ENCODE measurements at regions of chr12 and their contacts with region 1.

Region 1: GRCh38 chr12:50074936-50075807 is 10.0 kb upstream of the SMARCD1 start:
- DNase-seq: peak; percentile 83
- H3K4me3 ChIP-seq: no peak overlapping the region
- H3K27ac ChIP-seq: no peak overlapping the region
- H3K4me1 ChIP-seq: peaks cover 9% of the 10 kb centered on the region
- CTCF ChIP-seq: peak; percentile 92

Region 2: DNA sequence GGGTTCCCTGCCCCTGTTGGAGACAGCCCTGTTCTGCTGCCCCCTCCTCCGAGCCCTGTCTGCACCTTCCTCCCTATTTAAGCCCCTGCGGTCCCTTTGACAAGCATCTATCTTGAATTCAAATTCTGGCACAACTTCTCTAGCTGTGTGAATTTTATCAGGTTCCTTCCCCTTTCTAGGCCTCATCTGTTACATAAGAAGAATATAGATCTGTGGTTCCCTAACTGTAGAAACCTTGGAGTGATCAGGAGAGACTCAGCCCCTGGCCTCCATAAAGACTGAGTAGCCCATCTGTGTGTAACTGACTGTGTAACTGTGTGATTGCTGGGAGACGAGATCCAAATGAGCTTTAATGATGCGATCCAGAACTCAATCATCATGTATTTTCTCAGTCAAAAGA is 36.8 kb before region 1 on chr12:
- CTCF ChIA-PET with region 1: no interaction called
- POLR2A ChIA-PET with region 1: interaction called, 3 read pairs
- intact Hi-C with region 1: loop called (anchors 5 kb)
- DNase-seq: no peak
- H3K4me3 ChIP-seq: no peak overlapping the region
- H3K27ac ChIP-seq: no peak overlapping the region
- H3K4me1 ChIP-seq: no peaks in the 10 kb centered on the region
- CTCF ChIP-seq: no peak

Region 3: GRCh38 chr12:50111693-50112455 is 36.7 kb after region 1 on chr12 and contains the start of gene COX14:
- CTCF ChIA-PET with region 1: interaction called, 26 read pairs
- POLR2A ChIA-PET with region 1: no interaction called
- intact Hi-C with region 1: loop called (anchors 2 kb)
- DNase-seq: peak; percentile 100
- H3K4me3 ChIP-seq: peak within 1 kb of the TSS; percentile 80
- H3K27ac ChIP-seq: peak within 1 kb of the TSS; percentile 85
- H3K4me1 ChIP-seq: peaks cover 33% of the 10 kb centered on the region
- CTCF ChIP-seq: peak; percentile 98
- total RNA-seq, gene COX14: 51.4 and 57.4 TPM in 2 replicates

Region 4: GRCh38 chr12:50147281-50147680 is 72.1 kb after region 1 on chr12:
- CTCF ChIA-PET with region 1: no interaction called
- POLR2A ChIA-PET with region 1: interaction called, 10 read pairs
- intact Hi-C with region 1: no loop called
- DNase-seq: no peak
- H3K4me3 ChIP-seq: no peak overlapping the region
- H3K27ac ChIP-seq: no peak overlapping the region
- H3K4me1 ChIP-seq: no peaks in the 10 kb centered on the region
- CTCF ChIP-seq: no peak

Region 5: DNA sequence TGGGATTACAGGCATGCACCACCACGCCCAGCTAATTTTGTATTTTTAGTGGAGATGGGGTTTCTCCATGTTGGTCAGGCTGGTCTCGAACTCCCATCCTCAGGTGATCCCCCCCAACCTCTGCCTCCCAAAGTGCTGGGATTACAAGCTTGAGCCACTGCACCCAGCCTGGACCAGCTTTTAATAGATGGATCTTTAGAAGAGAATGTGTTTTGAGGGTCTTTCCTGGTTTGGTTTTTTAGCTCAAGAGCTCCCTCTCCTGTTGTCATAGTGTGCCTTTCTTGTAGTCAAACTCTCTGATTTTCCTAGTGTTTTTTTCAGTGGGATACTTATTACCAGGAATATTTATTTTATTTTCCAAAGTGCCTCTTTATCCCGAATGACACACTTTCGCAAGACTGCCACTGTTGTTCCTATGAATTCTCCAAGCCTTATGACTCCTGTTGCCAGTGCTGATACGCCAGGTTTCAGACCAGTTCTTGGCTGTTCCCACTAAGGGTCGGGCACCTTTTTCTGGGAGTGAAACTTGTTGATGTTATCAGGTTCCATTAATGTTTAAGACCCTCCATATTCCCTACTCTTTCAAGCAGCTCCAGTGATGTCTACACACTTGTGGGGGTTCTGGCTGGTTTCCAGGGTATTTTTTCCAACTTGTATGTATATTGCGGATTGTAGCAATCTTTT is 239.6 kb after region 1 on chr12:
- CTCF ChIA-PET with region 1: no interaction called
- POLR2A ChIA-PET with region 1: no interaction called
- intact Hi-C with region 1: loop called (anchors 1 kb)
- DNase-seq: peak; percentile 50
- H3K4me3 ChIP-seq: no peak overlapping the region
- H3K27ac ChIP-seq: no peak overlapping the region
- H3K4me1 ChIP-seq: no peaks in the 10 kb centered on the region
- CTCF ChIP-seq: peak; percentile 85